ENCODE measurements at regions of chr20 and their contacts with region 1.

Region 1: GRCh38 chr20:49484180-49485140 is 2.0 kb upstream of the KCNB1 start:
- DNase-seq: peak; percentile 84
- H3K4me3 Mint-ChIP-seq: peak overlapping the region; percentile 69
- H3K27ac Mint-ChIP-seq: no peak overlapping the region
- H3K4me1 Mint-ChIP-seq: peaks cover 7% of the 10 kb centered on the region
- H3K27me3 Mint-ChIP-seq: peaks cover 16% of the 10 kb centered on the region
- CTCF ChIP-seq: peak; percentile 84

Region 2: GRCh38 chr20:49323622-49324238 is 160.7 kb before region 1 on chr20:
- CTCF ChIA-PET with region 1: interaction called, 18 read pairs
- POLR2A ChIA-PET with region 1: interaction called, 3 read pairs
- intact Hi-C with region 1: no loop called
- DNase-seq: peak; percentile 76
- H3K4me3 Mint-ChIP-seq: no peak overlapping the region
- H3K27ac Mint-ChIP-seq: no peak overlapping the region
- H3K4me1 Mint-ChIP-seq: no peaks in the 10 kb centered on the region
- H3K27me3 Mint-ChIP-seq: peaks cover 7% of the 10 kb centered on the region
- CTCF ChIP-seq: peak; percentile 35

Region 3: GRCh38 chr20:49338061-49338460 is 146.4 kb before region 1 on chr20:
- CTCF ChIA-PET with region 1: interaction called, 174 read pairs
- POLR2A ChIA-PET with region 1: interaction called, 21 read pairs
- intact Hi-C with region 1: loop called (anchors 1 kb)
- DNase-seq: no peak
- H3K4me3 Mint-ChIP-seq: no peak overlapping the region
- H3K27ac Mint-ChIP-seq: peak overlapping the region; percentile 57
- H3K4me1 Mint-ChIP-seq: peaks cover 11% of the 10 kb centered on the region
- H3K27me3 Mint-ChIP-seq: peaks cover 3% of the 10 kb centered on the region
- CTCF ChIP-seq: no peak

Region 4: GRCh38 chr20:49372095-49372726 is 112.2 kb before region 1 on chr20:
- CTCF ChIA-PET with region 1: interaction called, 11 read pairs
- POLR2A ChIA-PET with region 1: interaction called, 5 read pairs
- intact Hi-C with region 1: no loop called
- DNase-seq: peak; percentile 95
- H3K4me3 Mint-ChIP-seq: peak overlapping the region; percentile 29
- H3K27ac Mint-ChIP-seq: no peak overlapping the region
- H3K4me1 Mint-ChIP-seq: peaks cover 14% of the 10 kb centered on the region
- H3K27me3 Mint-ChIP-seq: no peaks in the 10 kb centered on the region
- CTCF ChIP-seq: no peak

Region 5: GRCh38 chr20:49424536-49424935 is 59.9 kb before region 1 on chr20:
- CTCF ChIA-PET with region 1: interaction called, 14 read pairs
- POLR2A ChIA-PET with region 1: interaction called, 3 read pairs
- intact Hi-C with region 1: loop called (anchors 2 kb)
- DNase-seq: no peak
- H3K4me3 Mint-ChIP-seq: no peak overlapping the region
- H3K27ac Mint-ChIP-seq: no peak overlapping the region
- H3K4me1 Mint-ChIP-seq: peaks cover 29% of the 10 kb centered on the region
- H3K27me3 Mint-ChIP-seq: no peaks in the 10 kb centered on the region
- CTCF ChIP-seq: no peak

Region 6: DNA sequence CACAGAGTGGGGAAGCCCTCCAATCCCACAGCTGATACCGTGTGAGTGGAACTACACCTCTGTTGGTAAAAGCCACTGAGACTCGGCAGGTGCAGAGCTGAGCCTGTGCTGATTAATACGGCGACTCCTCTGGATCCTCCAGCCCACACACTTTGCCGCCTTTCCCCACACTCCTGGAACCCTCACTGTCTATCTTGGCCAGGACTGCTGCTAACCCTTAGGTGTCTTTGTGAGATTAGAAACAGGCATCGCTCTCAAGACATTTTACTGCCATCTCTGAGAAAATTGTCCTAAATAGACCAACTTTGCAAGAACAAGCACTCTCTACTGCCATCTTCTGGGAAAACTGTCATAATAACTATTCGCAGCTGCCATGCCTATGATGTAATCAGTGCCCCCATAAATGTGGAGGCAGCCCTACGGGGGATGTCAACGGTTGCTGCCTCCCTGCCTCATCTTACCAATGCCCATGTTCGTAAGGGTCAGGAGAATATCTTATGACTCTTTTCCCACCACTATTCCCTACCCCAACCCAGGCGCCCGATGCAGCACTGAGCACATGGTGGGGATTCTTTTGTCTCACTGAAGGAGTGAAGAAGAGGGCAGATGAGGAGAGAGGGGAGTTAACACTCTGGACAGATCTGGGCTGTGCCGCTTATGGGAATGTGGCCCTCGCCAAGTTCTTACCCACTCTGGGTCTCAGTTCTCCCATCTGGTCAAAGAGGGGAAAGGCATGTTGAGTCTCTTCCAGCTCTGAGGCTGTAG is 24.2 kb after region 1 on chr20:
- CTCF ChIA-PET with region 1: interaction called, 79 read pairs
- POLR2A ChIA-PET with region 1: interaction called, 10 read pairs
- intact Hi-C with region 1: loop called (anchors 1 kb)
- DNase-seq: peak; percentile 57
- H3K4me3 Mint-ChIP-seq: no peak overlapping the region
- H3K27ac Mint-ChIP-seq: no peak overlapping the region
- H3K4me1 Mint-ChIP-seq: peaks cover 16% of the 10 kb centered on the region
- H3K27me3 Mint-ChIP-seq: no peaks in the 10 kb centered on the region
- CTCF ChIP-seq: peak; percentile 69

Region 7: GRCh38 chr20:49534255-49534712 is 49.8 kb after region 1 on chr20:
- CTCF ChIA-PET with region 1: interaction called, 17 read pairs
- POLR2A ChIA-PET with region 1: no interaction called
- intact Hi-C with region 1: loop called (anchors 1 kb)
- DNase-seq: peak; percentile 74
- H3K4me3 Mint-ChIP-seq: no peak overlapping the region
- H3K27ac Mint-ChIP-seq: no peak overlapping the region
- H3K4me1 Mint-ChIP-seq: peaks cover 4% of the 10 kb centered on the region
- H3K27me3 Mint-ChIP-seq: no peaks in the 10 kb centered on the region
- CTCF ChIP-seq: peak; percentile 87

Region 8: GRCh38 chr20:49585585-49586245 is 101.3 kb after region 1 on chr20:
- CTCF ChIA-PET with region 1: no interaction called
- POLR2A ChIA-PET with region 1: no interaction called
- intact Hi-C with region 1: no loop called
- DNase-seq: no peak
- H3K4me3 Mint-ChIP-seq: no peak overlapping the region
- H3K27ac Mint-ChIP-seq: no peak overlapping the region
- H3K4me1 Mint-ChIP-seq: peaks cover 18% of the 10 kb centered on the region
- H3K27me3 Mint-ChIP-seq: no peaks in the 10 kb centered on the region
- CTCF ChIP-seq: no peak

Region 9: DNA sequence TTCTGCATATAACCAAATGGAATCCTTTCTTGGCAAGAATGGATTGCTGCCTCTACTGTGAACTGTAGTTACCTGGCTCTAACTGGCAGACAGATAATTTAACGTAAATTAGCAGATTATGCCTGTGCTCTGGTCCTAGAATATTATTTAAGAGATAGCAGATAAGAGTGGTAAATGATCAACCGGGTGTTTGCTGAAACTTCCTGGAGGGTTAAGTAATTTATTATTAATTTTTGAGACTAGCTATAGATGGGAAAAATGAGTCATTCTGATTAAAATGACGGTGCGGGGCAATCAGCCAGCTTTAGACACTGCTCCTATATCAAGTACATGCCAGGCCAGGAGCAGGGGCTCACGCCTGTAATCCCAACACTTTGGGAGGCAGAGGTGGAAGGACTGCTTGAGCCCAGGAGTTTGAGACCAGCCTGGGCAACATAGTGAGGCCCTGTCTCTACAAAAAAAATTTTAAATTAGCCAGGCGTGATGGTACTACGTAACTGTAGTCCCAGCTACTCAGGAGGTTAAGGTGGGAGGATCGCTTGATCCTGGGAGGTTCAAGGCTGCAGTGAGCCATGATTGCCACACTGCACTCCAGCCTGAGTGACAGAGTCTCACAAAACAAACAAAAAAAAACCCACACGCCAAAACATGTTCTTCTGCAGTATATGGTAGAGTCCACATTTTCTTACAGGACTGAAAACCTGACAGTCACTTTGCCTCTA is 206.6 kb after region 1 on chr20:
- CTCF ChIA-PET with region 1: no interaction called
- POLR2A ChIA-PET with region 1: no interaction called
- intact Hi-C with region 1: no loop called
- DNase-seq: peak; percentile 75
- H3K4me3 Mint-ChIP-seq: no peak overlapping the region
- H3K27ac Mint-ChIP-seq: peak overlapping the region; percentile 81
- H3K4me1 Mint-ChIP-seq: peaks cover 48% of the 10 kb centered on the region
- H3K27me3 Mint-ChIP-seq: no peaks in the 10 kb centered on the region
- CTCF ChIP-seq: no peak